CD4-positive, alpha-beta memory T cell (primary cell): ENCODE measurements at regions of chr16 and their contacts with region 1.

Region 1: DNA sequence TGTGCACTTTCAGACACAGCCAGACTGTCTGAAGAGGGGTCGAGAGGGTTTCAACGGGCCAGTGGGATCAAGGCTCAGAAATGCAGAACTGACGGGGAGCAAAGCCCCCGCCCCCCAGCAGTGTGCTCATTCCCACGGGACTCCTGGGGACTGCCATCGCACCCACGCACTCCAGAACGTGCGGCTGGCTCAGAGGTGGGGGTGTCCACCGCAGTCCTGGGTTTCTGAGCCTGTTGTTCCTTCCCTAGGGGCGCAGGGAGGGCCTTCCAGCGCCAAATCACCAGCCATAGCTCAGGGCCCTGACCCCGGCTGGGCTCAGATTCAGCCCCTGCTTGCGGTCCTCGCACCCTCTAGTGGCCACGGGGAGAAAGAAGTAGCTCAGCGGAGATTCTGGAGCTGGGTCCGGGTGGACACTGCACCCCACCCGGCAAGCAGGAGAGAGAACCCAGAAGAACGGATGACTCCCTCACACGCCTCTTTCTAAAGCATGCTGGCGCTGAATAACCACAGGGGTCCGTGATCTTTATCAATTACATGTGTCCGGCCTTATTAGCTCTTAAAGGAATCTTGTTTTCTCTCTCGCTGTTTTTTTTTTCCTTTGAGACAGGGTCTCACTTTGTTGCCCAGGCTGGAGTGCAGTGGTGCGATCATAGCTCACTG is 45.0 kb upstream of the USP7 start:
- DNase-seq: peak; percentile 51 to 64 (median 56)
- H3K4me3 ChIP-seq: no peak overlapping the region
- H3K4me3 Mint-ChIP-seq: peak overlapping the region in 1 of 8 donors; percentile 45
- H3K27ac ChIP-seq: no peak overlapping the region
- H3K27ac Mint-ChIP-seq: no peak overlapping the region
- H3K4me1 ChIP-seq: peaks cover 7% of the 10 kb centered on the region
- H3K4me1 Mint-ChIP-seq: peaks cover 0 to 6% (median under 1%) of the 10 kb centered on the region in 4 donors
- H3K27me3 ChIP-seq: no peaks in the 10 kb centered on the region
- H3K27me3 Mint-ChIP-seq: peaks cover 1 to 16% of the 10 kb centered on the region in 2 donors

Region 2: DNA sequence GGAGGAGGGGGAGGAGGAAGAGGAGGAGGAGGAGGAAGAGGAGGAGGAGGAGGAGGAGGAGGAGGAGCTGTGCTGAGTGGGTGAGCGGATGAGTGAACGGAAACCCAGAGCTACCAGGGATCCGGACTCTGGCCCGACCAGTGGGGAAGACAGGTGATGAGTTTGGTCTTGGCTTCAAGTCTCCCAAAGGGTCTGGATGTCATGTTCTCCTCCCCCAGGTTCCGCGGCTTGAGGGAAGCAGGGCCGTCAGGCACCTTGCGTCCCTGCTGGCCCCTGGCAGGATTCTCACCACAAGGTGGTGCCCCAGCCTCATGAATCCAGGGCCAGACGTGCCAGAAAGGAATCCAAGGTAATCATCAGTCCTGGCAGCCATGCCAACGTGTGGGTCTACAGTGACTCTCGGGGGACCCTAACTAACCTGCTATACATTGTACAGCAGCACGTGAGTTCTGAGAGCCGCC is 347.9 kb before region 1 on chr16:
- CTCF ChIA-PET with region 1: interaction called, 20 read pairs
- POLR2A ChIA-PET with region 1: no interaction called
- intact Hi-C with region 1: no loop called
- DNase-seq: peak in 4 of 5 donors; percentile 17 to 43 (median 28)
- H3K4me3 ChIP-seq: no peak overlapping the region
- H3K4me3 Mint-ChIP-seq: no peak overlapping the region
- H3K27ac ChIP-seq: no peak overlapping the region
- H3K27ac Mint-ChIP-seq: no peak overlapping the region
- H3K4me1 ChIP-seq: no peaks in the 10 kb centered on the region
- H3K4me1 Mint-ChIP-seq: peaks cover 0 to 1% (median 0%) of the 10 kb centered on the region in 4 donors
- H3K27me3 ChIP-seq: no peaks in the 10 kb centered on the region
- H3K27me3 Mint-ChIP-seq: no peaks in the 10 kb centered on the region

Region 3: GRCh38 chr16:8892101-8892575 is 116.6 kb before region 1 on chr16:
- CTCF ChIA-PET with region 1: interaction called, 18 read pairs
- POLR2A ChIA-PET with region 1: no interaction called
- intact Hi-C with region 1: loop called (anchors 1 kb)
- DNase-seq: no peak
- H3K4me3 ChIP-seq: no peak overlapping the region
- H3K4me3 Mint-ChIP-seq: peak overlapping the region; percentile 23 to 61 (median 44)
- H3K27ac ChIP-seq: peak overlapping the region; percentile 43
- H3K27ac Mint-ChIP-seq: peak overlapping the region; percentile 79 to 98 (median 94)
- H3K4me1 ChIP-seq: peaks cover 14% of the 10 kb centered on the region
- H3K4me1 Mint-ChIP-seq: peaks cover 9 to 24% (median 14%) of the 10 kb centered on the region in 4 donors
- H3K27me3 ChIP-seq: no peaks in the 10 kb centered on the region
- H3K27me3 Mint-ChIP-seq: no peaks in the 10 kb centered on the region

Region 4: GRCh38 chr16:8936421-8936820 is 72.3 kb before region 1 on chr16:
- CTCF ChIA-PET with region 1: interaction called, 70 read pairs
- POLR2A ChIA-PET with region 1: no interaction called
- intact Hi-C with region 1: loop called (anchors 1 kb)
- DNase-seq: peak; percentile 58 to 82 (median 66)
- H3K4me3 ChIP-seq: no peak overlapping the region
- H3K4me3 Mint-ChIP-seq: peak overlapping the region in 4 of 8 donors; percentile 39 to 62 (median 48)
- H3K27ac ChIP-seq: no peak overlapping the region
- H3K27ac Mint-ChIP-seq: peak overlapping the region; percentile 2 to 49 (median 26)
- H3K4me1 ChIP-seq: peaks cover 76% of the 10 kb centered on the region
- H3K4me1 Mint-ChIP-seq: peaks cover 70 to 89% (median 79%) of the 10 kb centered on the region in 4 donors
- H3K27me3 ChIP-seq: no peaks in the 10 kb centered on the region
- H3K27me3 Mint-ChIP-seq: no peaks in the 10 kb centered on the region

Region 5: DNA sequence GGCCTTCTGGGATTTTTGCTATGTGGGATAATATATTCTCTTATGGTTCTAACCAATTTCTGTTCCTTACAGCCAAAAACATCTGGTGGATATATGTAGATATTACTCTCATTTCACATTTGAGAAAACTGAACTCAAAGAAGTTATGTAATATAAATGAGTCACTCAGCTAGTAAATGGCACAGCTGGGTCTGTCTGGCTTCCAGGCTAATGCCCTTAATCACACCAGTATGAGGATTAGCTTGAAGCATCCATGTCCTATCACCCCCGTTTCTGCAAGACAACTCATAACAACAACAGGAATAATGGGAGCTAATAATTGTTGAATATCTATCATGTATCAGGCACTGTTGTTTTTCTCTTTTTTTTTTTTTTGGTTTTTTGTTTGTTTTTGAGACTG is 10.6 kb before region 1 on chr16:
- CTCF ChIA-PET with region 1: interaction called, 25 read pairs
- POLR2A ChIA-PET with region 1: no interaction called
- intact Hi-C with region 1: no loop called
- DNase-seq: no peak
- H3K4me3 ChIP-seq: no peak overlapping the region
- H3K4me3 Mint-ChIP-seq: no peak overlapping the region
- H3K27ac ChIP-seq: no peak overlapping the region
- H3K27ac Mint-ChIP-seq: no peak overlapping the region
- H3K4me1 ChIP-seq: no peaks in the 10 kb centered on the region
- H3K4me1 Mint-ChIP-seq: no peaks in the 10 kb centered on the region
- H3K27me3 ChIP-seq: no peaks in the 10 kb centered on the region
- H3K27me3 Mint-ChIP-seq: no peaks in the 10 kb centered on the region